ENCODE measurements at regions of chr7 and their contacts with region 1.

Region 1: DNA sequence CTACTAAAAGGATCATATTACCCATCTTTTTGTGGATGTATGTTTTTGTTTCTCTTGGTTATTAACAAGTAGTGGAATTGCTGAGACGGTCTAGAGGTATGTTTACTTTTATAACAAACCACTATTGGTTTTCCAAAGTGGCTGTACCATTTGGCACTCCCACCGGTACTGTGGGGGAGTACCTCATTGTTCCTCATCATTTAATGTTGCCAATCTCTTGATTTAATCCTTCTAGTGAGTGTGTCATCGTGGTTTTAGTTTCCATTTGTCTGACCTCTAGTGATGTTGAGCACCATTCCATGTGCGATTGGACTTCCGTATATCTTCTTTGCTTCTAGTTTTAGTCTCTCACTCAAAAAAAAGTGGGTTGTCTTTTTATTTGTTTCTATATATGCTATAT is 50.4 kb downstream of the RBM33 start:
- DNase-seq: no peak
- H3K4me3 Mint-ChIP-seq: no peak overlapping the region
- H3K27ac Mint-ChIP-seq: no peak overlapping the region
- H3K4me1 Mint-ChIP-seq: peaks cover 56% of the 10 kb centered on the region
- H3K27me3 Mint-ChIP-seq: no peaks in the 10 kb centered on the region

Region 2: DNA sequence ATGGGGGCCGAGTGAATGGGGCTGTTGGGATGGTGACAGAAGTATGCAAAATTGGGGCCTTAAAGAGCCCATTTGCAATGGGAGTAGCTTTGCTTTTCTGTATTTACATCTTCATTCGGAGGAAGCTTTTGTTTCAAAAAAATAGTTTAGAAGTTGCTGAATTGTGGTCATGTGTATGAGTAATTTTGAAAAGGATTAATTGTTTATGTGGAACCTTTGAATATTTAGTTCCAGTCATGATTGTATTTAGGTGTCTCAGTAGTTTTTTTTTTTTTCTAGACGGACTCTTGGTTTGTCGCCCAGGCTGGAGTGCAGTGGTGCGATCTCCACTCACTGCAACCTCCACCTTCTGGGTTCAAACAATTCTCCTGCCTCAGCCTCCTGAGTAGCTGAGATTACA is 13.2 kb before region 1 on chr7:
- intact Hi-C with region 1: loop called (anchors 2 kb)
- DNase-seq: no peak
- H3K4me3 Mint-ChIP-seq: no peak overlapping the region
- H3K27ac Mint-ChIP-seq: no peak overlapping the region
- H3K4me1 Mint-ChIP-seq: peaks cover 31% of the 10 kb centered on the region
- H3K27me3 Mint-ChIP-seq: no peaks in the 10 kb centered on the region